Activated T-helper 1 cell treated with anti-CD3 and anti-CD28 coated beads, Interleukin-12 subunit alpha, Interleukin-12 subunit beta, Interleukin-2, Interleukin-4 antibody, amounts not matched to agents 30 ng/mL and 10 ng/mL and 1 ng/mL, durations not matched to agents 14 hours and 24 hours and 36 hours (primary cell): ENCODE measurements at regions of chr15 and their contacts with region 1.

Region 1: GRCh38 chr15:65384895-65385858 is 7.4 kb upstream of the IGDCC3 start:
- DNase-seq: peak; percentile 77
- H3K4me3 Mint-ChIP-seq: peak overlapping the region; percentile 83
- H3K27ac Mint-ChIP-seq: peak overlapping the region; percentile 86
- H3K4me1 Mint-ChIP-seq: peaks cover 11% of the 10 kb centered on the region
- H3K27me3 Mint-ChIP-seq: peaks cover 28% of the 10 kb centered on the region

Region 2: GRCh38 chr15:65318870-65319356 is 66.3 kb before region 1 on chr15:
- intact Hi-C with region 1: loop called (anchors 1 kb)
- DNase-seq: peak; percentile 64
- H3K4me3 Mint-ChIP-seq: no peak overlapping the region
- H3K27ac Mint-ChIP-seq: no peak overlapping the region
- H3K4me1 Mint-ChIP-seq: no peaks in the 10 kb centered on the region
- H3K27me3 Mint-ChIP-seq: peaks cover 3% of the 10 kb centered on the region

Region 3: DNA sequence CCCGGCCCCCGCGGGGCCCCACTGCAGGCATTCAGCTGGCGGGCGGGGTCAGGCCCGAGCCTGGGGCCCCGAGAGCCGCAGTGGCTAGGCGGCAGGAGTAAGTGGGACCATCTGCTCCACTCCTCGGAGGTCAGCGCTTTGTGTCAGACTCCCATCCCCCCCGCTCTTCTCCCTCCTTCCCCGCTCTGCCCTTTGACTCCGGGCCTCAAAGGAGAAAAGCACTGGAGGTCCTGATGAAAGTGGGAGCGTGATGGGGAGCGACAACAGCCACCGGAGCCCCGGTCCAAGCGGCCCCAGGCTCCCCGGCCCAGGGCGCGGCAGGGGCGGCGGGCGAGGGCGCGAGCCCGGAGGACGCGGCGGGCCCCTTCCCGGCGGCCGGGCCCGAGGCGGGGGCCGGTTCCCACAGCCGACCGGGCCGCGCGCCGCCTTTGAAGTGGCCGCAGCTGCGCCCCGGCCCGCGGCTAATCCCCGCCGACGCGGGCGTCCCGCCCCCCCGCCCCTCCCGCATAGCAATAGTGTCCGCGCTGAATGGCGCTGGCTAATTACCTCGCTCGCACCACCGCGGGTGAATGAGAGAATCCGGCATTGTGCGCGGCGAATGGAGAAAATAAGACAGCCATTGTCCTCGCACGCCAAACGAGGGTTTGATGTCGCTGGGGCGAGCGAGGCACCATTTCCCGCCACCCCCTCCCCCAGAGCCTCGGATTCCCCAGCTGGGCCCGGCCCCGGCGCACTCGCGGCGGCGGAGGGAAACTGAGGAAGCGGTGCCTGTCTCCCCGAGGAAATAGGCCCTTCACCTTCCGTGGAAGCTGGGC is 29.8 kb before region 1 on chr15:
- intact Hi-C with region 1: no loop called
- DNase-seq: no peak
- H3K4me3 Mint-ChIP-seq: no peak overlapping the region
- H3K27ac Mint-ChIP-seq: no peak overlapping the region
- H3K4me1 Mint-ChIP-seq: no peaks in the 10 kb centered on the region
- H3K27me3 Mint-ChIP-seq: peaks cover 63% of the 10 kb centered on the region

Region 4: DNA sequence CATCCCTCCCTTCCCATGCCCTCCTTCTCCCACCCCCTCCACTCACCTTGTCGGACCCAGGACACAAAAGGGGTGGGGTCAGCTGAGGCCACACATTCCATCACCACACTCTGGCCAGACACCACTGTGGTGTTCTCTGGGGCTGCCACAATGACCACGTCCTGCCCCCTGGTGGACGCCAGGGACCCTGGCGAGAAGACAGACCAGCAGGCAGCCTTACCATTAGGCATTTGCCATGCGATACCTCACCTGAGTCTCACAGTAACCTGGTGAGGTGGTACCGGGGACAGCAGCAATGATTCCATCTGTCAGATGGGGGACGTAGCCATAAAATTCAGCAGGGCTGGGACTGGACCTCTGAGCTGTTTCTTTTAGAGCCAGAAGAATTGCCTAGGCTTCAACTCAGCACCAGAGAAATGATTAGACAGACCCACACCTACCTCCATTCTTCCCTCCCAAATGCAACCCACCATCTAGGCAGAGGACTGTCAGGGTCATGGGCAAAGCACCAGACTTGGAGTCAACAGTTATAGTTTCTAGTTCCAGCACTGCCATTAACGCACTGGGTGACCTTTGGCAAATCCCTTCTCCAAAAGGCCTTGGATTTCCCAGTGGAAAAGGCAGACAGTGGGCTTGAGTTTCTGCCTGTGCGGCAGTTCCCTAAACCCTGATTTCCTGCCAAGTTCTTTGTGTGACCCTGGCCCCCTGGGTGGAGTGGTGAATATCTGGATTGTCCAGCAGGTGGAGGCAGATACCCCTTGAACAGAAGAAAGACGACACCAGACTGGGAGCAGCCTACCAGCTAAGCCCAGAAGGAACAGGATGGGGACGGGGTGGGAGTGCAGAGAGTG is 15.8 kb after region 1 on chr15:
- intact Hi-C with region 1: loop called (anchors 2 kb)
- DNase-seq: peak; percentile 21
- H3K4me3 Mint-ChIP-seq: no peak overlapping the region
- H3K27ac Mint-ChIP-seq: no peak overlapping the region
- H3K4me1 Mint-ChIP-seq: no peaks in the 10 kb centered on the region
- H3K27me3 Mint-ChIP-seq: peaks cover 48% of the 10 kb centered on the region

Region 5: GRCh38 chr15:65516997-65517865 is 132.1 kb after region 1 on chr15 and contains the start of gene DPP8:
- intact Hi-C with region 1: no loop called
- DNase-seq: peak; percentile 92
- H3K4me3 Mint-ChIP-seq: peak within 1 kb of the TSS; percentile 90
- H3K27ac Mint-ChIP-seq: peak within 1 kb of the TSS; percentile 90
- H3K4me1 Mint-ChIP-seq: peaks cover 32% of the 10 kb centered on the region
- H3K27me3 Mint-ChIP-seq: no peaks in the 10 kb centered on the region
- total RNA-seq, gene DPP8: 34.8 and 35.6 TPM in 2 replicates

Region 6: DNA sequence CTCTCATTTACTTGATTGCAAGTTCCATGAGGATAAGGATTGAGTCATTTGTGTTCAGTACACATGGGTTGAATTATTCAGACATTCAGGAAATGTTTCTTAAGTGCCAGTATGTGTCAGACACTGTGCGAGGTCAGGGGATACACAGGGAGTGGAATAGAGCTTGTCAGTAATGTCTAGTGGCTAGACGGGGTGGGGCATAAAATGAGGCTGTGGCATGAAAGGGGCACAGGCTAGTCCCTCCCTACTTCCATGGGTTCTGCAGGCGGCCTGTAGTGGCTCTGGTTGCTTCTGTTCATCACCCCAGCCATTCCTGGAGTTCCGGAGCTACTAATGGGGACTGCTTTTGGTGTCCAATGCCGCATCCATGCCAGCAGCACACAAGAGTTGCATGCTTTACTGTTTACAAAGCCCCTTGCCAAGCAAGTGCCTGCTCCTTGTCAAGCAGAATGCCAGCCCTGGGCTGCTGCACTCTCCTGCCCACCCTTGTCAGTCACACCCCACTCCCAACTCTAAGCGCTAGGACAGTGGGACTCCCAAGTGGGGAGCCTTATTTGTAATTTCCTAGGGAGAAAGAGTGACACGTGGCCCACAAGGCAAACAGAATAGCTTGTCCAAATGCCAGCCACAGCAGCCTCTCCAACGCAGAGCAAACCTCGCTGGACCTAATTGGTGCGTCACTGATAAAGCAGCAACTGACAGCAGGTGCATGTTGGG is 554.9 kb after region 1 on chr15:
- intact Hi-C with region 1: no loop called
- DNase-seq: no peak
- H3K4me3 Mint-ChIP-seq: no peak overlapping the region
- H3K27ac Mint-ChIP-seq: no peak overlapping the region
- H3K4me1 Mint-ChIP-seq: peaks cover 31% of the 10 kb centered on the region
- H3K27me3 Mint-ChIP-seq: peaks cover 4% of the 10 kb centered on the region